GM10248 (cell line): ENCODE measurements at regions of chr16 and their contacts with region 1.

Region 1: DNA sequence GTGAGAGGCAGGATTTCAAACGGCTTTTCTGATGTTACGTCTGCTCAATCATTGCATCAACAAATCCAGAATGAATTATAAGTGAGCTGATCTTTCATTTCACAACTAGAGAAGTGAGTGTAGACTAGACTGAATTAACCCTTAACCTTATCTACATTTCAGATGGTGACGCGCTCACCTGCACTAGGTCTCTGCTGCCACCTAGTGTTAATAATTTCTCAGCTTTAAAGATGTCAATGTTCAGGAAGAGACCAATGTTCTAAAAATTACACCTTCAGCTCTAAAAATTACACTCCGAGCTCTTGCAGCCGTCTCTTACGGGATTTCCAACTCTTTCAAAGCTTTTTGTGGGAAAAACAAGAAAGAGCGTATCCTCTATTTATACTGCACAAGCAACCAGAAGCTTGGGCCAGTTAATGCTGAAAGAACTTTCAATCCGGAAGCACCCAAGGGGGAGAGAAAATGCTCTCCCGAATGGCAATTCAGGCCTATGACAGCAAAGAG is 88.2 kb upstream of the FA2H start:
- DNase-seq: peak; percentile 79
- CTCF ChIP-seq: peak; percentile 62

Region 2: DNA sequence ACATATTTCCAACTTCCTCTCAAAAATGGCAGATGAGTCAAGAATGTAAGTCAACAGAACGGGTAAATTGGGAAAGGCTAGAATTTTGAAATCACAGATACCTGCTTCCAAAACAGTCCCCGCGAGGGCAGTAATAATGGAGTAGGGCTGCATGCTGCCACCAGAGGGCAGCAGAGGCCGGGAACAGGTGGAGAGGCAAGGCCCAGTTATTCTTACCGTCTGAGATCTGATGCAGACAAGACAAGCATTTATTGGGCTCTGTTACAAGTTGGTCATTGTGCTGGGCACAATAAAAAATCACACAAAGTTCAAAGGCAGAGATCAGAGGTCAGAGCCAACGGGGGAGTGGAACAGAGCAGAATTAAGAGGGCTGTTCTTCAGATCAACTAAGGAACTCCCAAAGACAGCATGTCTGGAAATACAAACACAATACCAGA is 153.3 kb before region 1 on chr16:
- CTCF ChIA-PET with region 1: interaction called, 121 read pairs
- POLR2A ChIA-PET with region 1: no interaction called
- DNase-seq: peak; percentile 85
- CTCF ChIP-seq: peak; percentile 96

Region 3: GRCh38 chr16:74774203-74775116 is 88.3 kb before region 1 on chr16 and contains the start of gene FA2H:
- CTCF ChIA-PET with region 1: interaction called, 20 read pairs
- POLR2A ChIA-PET with region 1: no interaction called
- DNase-seq: peak; percentile 91
- CTCF ChIP-seq: peak; percentile 38

Region 4: GRCh38 chr16:74820942-74821341 is 41.9 kb before region 1 on chr16:
- CTCF ChIA-PET with region 1: interaction called, 15 read pairs
- POLR2A ChIA-PET with region 1: no interaction called
- DNase-seq: no peak
- CTCF ChIP-seq: no peak

Region 5: DNA sequence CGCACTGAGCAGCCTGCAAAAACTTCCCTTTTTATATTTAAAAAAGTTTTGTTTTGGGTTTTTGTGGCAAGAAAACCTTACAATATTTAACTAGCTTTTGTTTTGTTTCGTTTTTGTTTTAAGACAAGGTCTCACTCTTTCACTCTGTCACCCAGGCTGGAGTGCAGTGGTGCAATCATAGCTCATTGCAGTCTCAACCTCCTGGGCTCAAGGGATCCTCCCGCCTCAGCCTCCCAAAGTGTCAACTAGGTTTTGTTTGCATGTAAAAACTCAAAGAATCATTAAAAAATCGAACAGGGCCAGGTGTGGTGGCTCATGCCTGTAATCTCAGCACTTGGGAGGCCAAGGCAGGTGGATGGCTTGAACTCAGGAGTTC is 10.3 kb before region 1 on chr16:
- CTCF ChIA-PET with region 1: interaction called, 28 read pairs
- POLR2A ChIA-PET with region 1: no interaction called
- DNase-seq: no peak
- CTCF ChIP-seq: no peak

Region 6: GRCh38 chr16:75333721-75334163 is 470.9 kb after region 1 on chr16:
- CTCF ChIA-PET with region 1: no interaction called
- POLR2A ChIA-PET with region 1: interaction called, 15 read pairs
- DNase-seq: no peak
- CTCF ChIP-seq: no peak